ENCODE measurements at regions of chr19 and their contacts with region 1.

Region 1: DNA sequence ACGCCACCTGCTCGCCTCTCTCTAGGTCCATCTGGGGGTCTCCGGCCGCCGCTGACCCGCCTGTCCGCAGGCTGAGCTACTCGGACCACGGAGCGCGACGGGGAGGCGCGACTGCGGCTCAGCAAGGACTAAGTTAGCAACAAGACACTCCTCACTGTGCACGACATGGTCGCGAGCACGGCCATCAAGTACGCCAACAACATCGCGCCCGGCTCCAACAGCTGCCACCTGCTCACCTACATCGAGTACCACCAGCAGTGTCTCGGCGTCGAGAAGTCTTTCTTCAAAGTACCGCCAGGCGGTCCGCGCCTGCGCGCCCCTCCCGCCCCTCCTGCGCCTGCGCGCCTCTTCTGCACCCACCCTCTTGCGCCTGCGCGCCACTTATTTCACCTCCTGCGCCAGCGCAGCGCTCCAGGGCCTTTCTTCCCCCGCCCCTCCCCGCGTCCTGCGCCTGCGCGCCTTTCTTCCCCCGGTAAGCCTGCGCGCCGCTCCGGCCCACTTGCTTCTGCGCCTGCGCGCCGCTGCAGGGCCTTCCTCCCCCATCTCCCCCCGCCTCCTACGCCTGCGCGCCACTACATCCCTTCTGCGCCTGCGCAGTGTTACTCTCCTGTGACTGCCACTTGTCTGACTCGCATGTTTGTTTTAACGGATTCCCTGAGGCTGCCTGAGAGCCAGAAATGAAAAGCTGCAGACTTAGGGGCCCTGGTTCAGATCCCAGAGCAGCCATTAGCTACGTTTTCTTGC is 63.9 kb downstream of the ACSBG2 start:
- DNase-seq: peak; percentile 94
- H3K4me3 ChIP-seq: peak overlapping the region; percentile 58
- H3K27me3 ChIP-seq: no peaks in the 10 kb centered on the region
- CTCF ChIP-seq: peak; percentile 44

Region 2: GRCh38 chr19:6116749-6117430 is 82.5 kb before region 1 on chr19:
- CTCF ChIA-PET with region 1: no interaction called
- POLR2A ChIA-PET with region 1: no interaction called
- DNase-seq: no peak
- H3K4me3 ChIP-seq: no peak overlapping the region
- H3K27me3 ChIP-seq: no peaks in the 10 kb centered on the region
- CTCF ChIP-seq: no peak

Region 3: GRCh38 chr19:6233827-6234511 is 34.6 kb after region 1 on chr19:
- CTCF ChIA-PET with region 1: no interaction called
- POLR2A ChIA-PET with region 1: no interaction called
- DNase-seq: no peak
- H3K4me3 ChIP-seq: no peak overlapping the region
- H3K27me3 ChIP-seq: no peaks in the 10 kb centered on the region
- CTCF ChIP-seq: no peak

Region 4: DNA sequence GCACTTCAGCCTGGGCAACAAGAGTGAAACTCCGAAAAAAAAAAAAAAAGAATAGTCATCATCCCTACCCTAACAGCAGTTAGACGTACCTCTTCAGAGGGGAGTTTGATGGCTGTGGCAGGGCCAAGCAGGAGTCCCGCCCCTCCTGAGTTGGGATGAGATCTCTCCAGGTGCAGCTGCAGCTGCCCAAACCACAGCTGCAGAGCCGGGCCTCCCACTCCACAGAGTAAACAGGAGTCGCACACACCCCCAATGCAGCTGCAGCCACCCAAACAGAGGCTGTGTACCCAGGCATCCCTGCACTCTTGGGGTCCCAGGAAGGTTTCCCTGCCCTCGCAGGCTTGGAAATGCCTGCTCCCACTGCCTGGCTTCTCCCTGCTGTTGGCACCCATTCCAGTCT is 97.8 kb after region 1 on chr19:
- CTCF ChIA-PET with region 1: interaction called, 11 read pairs
- POLR2A ChIA-PET with region 1: no interaction called
- DNase-seq: no peak
- H3K4me3 ChIP-seq: no peak overlapping the region
- H3K27me3 ChIP-seq: 0 out of 2 replicates have a peak, but pooled peaks cover 2% of the 10 kb centered on the region
- CTCF ChIP-seq: no peak

Region 5: GRCh38 chr19:6340493-6341201 is 141.2 kb after region 1 on chr19:
- CTCF ChIA-PET with region 1: no interaction called
- POLR2A ChIA-PET with region 1: interaction called, 10 read pairs
- DNase-seq: no peak
- H3K4me3 ChIP-seq: no peak overlapping the region
- H3K27me3 ChIP-seq: no peaks in the 10 kb centered on the region
- CTCF ChIP-seq: no peak